PC-3 (cell line): ENCODE measurements at regions of chr2 and their contacts with region 1.

Region 1: DNA sequence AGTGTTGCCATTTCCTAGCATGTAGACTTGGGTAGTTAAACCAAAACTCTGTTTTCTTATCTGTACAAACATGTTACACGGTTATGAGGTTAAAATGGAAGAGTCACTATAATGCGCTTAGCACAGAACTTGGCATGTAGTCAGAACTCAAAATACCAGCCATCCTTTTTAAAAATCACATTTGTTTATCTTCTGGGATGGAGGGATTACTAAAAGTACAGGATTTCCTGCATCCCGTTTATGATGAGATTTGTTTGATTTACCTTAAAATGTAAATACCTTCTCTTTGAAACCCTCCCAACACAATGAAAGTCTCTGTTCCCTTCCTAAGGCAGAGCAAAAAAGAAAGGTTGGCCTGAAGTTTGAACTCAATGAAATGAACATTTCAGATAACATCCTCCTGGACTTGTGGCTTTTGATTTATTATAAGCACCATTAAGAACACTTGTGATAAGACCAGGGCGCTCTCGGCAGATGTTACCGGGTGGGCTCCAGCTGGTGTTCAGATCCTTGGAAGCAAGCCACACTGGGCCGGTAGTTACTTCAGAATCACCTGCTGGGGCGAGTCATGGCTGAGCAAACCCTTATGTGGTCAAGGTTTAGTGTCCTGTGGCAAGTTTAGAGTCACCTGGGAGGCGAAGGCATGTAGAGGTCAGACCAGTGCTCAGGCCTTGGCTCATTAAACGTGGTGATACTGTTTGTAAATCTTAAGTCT is 105.7 kb downstream of the MGAT5 start:
- DNase-seq: peak; percentile 84
- ATAC-seq: peak; percentile 82
- H3K4me3 ChIP-seq: no peak overlapping the region
- H3K27ac ChIP-seq: peak overlapping the region; percentile 55
- H3K4me1 ChIP-seq: peaks cover 33% of the 10 kb centered on the region
- H3K27me3 ChIP-seq: no peaks in the 10 kb centered on the region
- CTCF ChIP-seq: no peak

Region 2: GRCh38 chr2:134301099-134301927 is 58.2 kb before region 1 on chr2:
- CTCF ChIA-PET with region 1: no interaction called
- POLR2A ChIA-PET with region 1: no interaction called
- intact Hi-C with region 1: loop called (anchors 5 kb)
- DNase-seq: peak; percentile 8
- ATAC-seq: peak; percentile 78
- H3K4me3 ChIP-seq: no peak overlapping the region
- H3K27ac ChIP-seq: no peak overlapping the region
- H3K4me1 ChIP-seq: peaks cover 4% of the 10 kb centered on the region; the same call in 1 of the 2 replicates
- H3K27me3 ChIP-seq: no peaks in the 10 kb centered on the region
- CTCF ChIP-seq: no peak

Region 3: DNA sequence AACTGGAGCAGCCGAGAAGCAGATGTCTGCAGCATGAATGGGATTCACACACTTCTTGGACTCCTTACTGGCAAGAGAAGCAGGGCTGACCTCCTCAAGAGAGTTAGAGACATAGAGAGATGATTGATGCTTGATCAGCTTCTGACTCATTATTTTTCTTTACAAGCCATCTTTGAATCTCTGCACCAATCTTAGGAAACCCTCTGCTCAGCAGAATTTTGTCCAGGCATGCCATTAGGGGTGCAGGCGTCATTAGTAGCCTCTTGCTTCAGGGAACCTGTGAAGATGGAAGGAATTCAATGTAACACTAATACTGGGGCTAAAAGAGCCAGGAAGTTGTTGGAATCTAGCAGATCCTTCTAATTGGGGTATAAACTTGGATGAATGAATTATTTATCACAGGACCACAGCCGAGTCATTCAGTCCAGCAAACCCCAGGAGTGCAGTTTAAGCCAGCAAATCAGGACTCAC is 46.1 kb after region 1 on chr2:
- CTCF ChIA-PET with region 1: no interaction called
- POLR2A ChIA-PET with region 1: no interaction called
- intact Hi-C with region 1: loop called (anchors 5 kb)
- DNase-seq: peak; percentile 40
- ATAC-seq: peak; percentile 4
- H3K4me3 ChIP-seq: no peak overlapping the region
- H3K27ac ChIP-seq: peak overlapping the region; percentile 35
- H3K4me1 ChIP-seq: peaks cover 47% of the 10 kb centered on the region
- H3K27me3 ChIP-seq: no peaks in the 10 kb centered on the region
- CTCF ChIP-seq: no peak